ENCODE measurements at regions of chr4 and their contacts with region 1.

Region 1: DNA sequence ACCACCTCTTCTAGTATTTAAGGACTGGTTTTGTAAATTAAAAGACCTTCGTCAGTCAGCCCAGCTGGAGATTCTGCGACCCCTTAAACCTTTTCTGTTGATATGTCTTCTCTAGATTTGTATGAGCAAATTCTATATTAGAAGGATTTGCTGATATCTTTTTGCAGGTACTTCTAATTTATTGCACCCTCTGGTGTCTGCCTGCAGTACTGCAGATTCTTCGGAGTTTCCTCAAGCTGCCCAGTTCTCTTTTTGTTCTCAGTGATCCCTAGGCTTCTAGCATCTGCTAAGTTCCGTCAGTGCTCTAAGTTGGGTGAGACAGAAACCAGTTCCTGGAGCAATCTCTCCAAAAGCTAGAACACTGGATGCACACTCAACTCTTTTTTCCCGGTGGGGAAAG is 545.2 kb downstream of the C4orf33 start:
- DNase-seq: peak; percentile 69
- H3K4me3 ChIP-seq: no peak overlapping the region
- H3K27ac ChIP-seq: no peak overlapping the region
- H3K4me1 ChIP-seq: no peaks in the 10 kb centered on the region
- H3K27me3 ChIP-seq: no peaks in the 10 kb centered on the region
- CTCF ChIP-seq: peak; percentile 80

Region 2: DNA sequence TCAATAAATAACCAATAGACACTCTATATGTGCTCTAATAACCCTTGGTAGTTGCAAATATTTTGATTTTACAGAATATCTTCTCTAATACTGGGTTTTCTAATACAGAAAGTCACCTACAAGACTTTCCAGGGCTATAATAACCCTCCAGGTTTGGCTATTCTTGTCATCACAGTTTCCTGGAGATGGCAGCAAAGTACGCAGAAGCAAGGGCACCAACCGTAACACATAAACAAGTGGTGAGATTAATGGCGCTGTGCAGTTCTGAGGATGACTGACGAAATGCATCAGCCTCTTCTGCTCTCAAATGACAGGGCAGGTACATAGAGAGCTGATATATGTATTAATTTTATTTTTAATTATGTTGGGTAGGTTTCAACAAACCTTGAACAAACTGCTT is 422.8 kb before region 1 on chr4:
- CTCF ChIA-PET with region 1: no interaction called
- POLR2A ChIA-PET with region 1: no interaction called
- intact Hi-C with region 1: loop called (anchors 5 kb)
- DNase-seq: peak; percentile 26
- H3K4me3 ChIP-seq: no peak overlapping the region
- H3K27ac ChIP-seq: no peak overlapping the region
- H3K4me1 ChIP-seq: no peaks in the 10 kb centered on the region
- H3K27me3 ChIP-seq: no peaks in the 10 kb centered on the region
- CTCF ChIP-seq: peak; percentile 36

Region 3: DNA sequence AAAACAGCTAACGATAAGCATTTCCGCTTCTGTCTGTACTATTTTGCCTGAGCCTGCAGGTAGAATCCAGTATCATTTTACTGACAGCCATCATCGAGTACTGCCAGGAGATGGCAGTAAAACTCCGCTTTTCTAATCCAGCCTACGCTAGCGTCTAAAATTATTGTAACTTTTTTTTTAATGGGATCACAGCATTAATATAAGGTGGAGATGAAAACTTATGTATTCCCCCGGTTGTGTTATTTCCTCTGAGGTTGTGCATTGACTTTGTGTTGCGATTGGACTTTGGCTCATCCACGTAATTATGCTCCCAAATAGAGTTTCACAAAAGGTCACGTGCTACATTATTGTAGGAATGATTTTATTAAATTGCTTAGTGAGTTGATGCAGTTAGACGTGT is 297.1 kb before region 1 on chr4:
- CTCF ChIA-PET with region 1: interaction called, 3 read pairs
- POLR2A ChIA-PET with region 1: no interaction called
- intact Hi-C with region 1: loop called (anchors 5 kb)
- DNase-seq: peak; percentile 59
- H3K4me3 ChIP-seq: no peak overlapping the region
- H3K27ac ChIP-seq: no peak overlapping the region
- H3K4me1 ChIP-seq: peaks cover 13% of the 10 kb centered on the region
- H3K27me3 ChIP-seq: no peaks in the 10 kb centered on the region
- CTCF ChIP-seq: peak; percentile 79

Region 4: GRCh38 chr4:129362674-129363274 is 278.4 kb before region 1 on chr4:
- CTCF ChIA-PET with region 1: interaction called, 8 read pairs
- POLR2A ChIA-PET with region 1: interaction called, 4 read pairs
- intact Hi-C with region 1: loop called (anchors 1 kb)
- DNase-seq: peak; percentile 76
- H3K4me3 ChIP-seq: no peak overlapping the region
- H3K27ac ChIP-seq: no peak overlapping the region
- H3K4me1 ChIP-seq: no peaks in the 10 kb centered on the region
- H3K27me3 ChIP-seq: no peaks in the 10 kb centered on the region
- CTCF ChIP-seq: peak; percentile 88

Region 5: GRCh38 chr4:129526814-129527213 is 114.4 kb before region 1 on chr4:
- CTCF ChIA-PET with region 1: no interaction called
- POLR2A ChIA-PET with region 1: no interaction called
- intact Hi-C with region 1: loop called (anchors 2 kb)
- DNase-seq: peak; percentile 40
- H3K4me3 ChIP-seq: no peak overlapping the region
- H3K27ac ChIP-seq: no peak overlapping the region
- H3K4me1 ChIP-seq: no peaks in the 10 kb centered on the region
- H3K27me3 ChIP-seq: no peaks in the 10 kb centered on the region
- CTCF ChIP-seq: peak; percentile 55